ENCODE measurements at regions of chr22 and their contacts with region 1.

Region 1: GRCh38 chr22:39997939-39998338 is 3.2 kb downstream of the FAM83F start:
- DNase-seq: peak; percentile 95
- H3K4me3 Mint-ChIP-seq: peak overlapping the region; percentile 73
- H3K27ac Mint-ChIP-seq: peak overlapping the region; percentile 61
- H3K4me1 Mint-ChIP-seq: peaks cover 62% of the 10 kb centered on the region
- H3K27me3 Mint-ChIP-seq: peaks cover 8% of the 10 kb centered on the region
- CTCF ChIP-seq: no peak

Region 2: GRCh38 chr22:39960791-39961746 is 36.9 kb before region 1 on chr22:
- CTCF ChIA-PET with region 1: interaction called, 3 read pairs
- POLR2A ChIA-PET with region 1: interaction called, 5 read pairs
- intact Hi-C with region 1: loop called (anchors 1 kb)
- DNase-seq: peak; percentile 80
- H3K4me3 Mint-ChIP-seq: peak overlapping the region; percentile 41
- H3K27ac Mint-ChIP-seq: peak overlapping the region; percentile 89
- H3K4me1 Mint-ChIP-seq: peaks cover 32% of the 10 kb centered on the region
- H3K27me3 Mint-ChIP-seq: no peaks in the 10 kb centered on the region
- CTCF ChIP-seq: no peak

Region 3: DNA sequence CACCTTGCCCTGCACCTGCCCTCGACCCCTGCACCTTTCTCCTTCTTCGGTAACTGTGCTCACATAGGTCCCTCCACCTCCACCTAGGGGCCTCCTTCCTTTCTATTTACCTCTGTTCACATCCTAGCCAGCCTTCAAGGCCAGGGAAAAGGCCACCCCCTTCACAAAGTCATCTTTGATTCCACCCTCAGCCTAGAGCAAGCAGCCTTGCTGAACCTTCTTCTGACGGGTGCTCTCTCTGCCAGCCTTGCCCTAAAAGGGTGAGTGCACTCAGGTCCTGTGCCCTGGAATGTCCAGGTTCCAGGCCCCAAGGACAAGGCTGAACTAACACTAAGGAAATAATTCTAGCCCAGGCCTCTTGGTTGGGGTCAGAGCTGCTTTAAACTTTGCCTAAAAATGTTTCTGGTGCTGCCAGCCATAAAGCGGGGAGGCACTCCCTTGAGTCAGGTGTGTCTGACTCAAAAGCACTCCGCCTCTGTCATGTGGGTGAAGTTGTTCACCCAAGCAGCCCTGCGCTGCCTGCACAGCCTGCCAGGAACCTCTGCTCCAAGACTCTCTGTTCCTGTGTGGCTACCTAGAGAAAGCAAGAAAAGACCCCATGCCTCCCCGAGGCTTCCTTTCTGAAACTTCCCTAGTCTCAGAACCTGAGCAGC is 12.4 kb before region 1 on chr22:
- CTCF ChIA-PET with region 1: interaction called, 4 read pairs
- POLR2A ChIA-PET with region 1: interaction called, 14 read pairs
- intact Hi-C with region 1: no loop called
- DNase-seq: no peak
- H3K4me3 Mint-ChIP-seq: peak overlapping the region; percentile 38
- H3K27ac Mint-ChIP-seq: peak overlapping the region; percentile 87
- H3K4me1 Mint-ChIP-seq: peaks cover 33% of the 10 kb centered on the region
- H3K27me3 Mint-ChIP-seq: no peaks in the 10 kb centered on the region
- CTCF ChIP-seq: no peak

Region 4: GRCh38 chr22:40009292-40009769 is 11.4 kb after region 1 on chr22:
- CTCF ChIA-PET with region 1: no interaction called
- POLR2A ChIA-PET with region 1: interaction called, 12 read pairs
- intact Hi-C with region 1: no loop called
- DNase-seq: no peak
- H3K4me3 Mint-ChIP-seq: peak overlapping the region; percentile 10
- H3K27ac Mint-ChIP-seq: peak overlapping the region; percentile 59
- H3K4me1 Mint-ChIP-seq: peaks cover 35% of the 10 kb centered on the region
- H3K27me3 Mint-ChIP-seq: no peaks in the 10 kb centered on the region
- CTCF ChIP-seq: no peak

Region 5: GRCh38 chr22:40055143-40055883 is 57.4 kb after region 1 on chr22:
- CTCF ChIA-PET with region 1: no interaction called
- POLR2A ChIA-PET with region 1: no interaction called
- intact Hi-C with region 1: no loop called
- DNase-seq: no peak
- H3K4me3 Mint-ChIP-seq: no peak overlapping the region
- H3K27ac Mint-ChIP-seq: no peak overlapping the region
- H3K4me1 Mint-ChIP-seq: peaks cover 24% of the 10 kb centered on the region
- H3K27me3 Mint-ChIP-seq: no peaks in the 10 kb centered on the region
- CTCF ChIP-seq: no peak

Measured in MCF 10A (cell line).